ENCODE measurements at regions of chr6 and their contacts with region 1.

Region 1: GRCh38 chr6:125314019-125314581 is 12.3 kb upstream of the HDDC2 start:
- DNase-seq: peak in 4 of 5 donors; percentile 58 to 86 (median 74)
- H3K4me3 ChIP-seq: no peak overlapping the region
- H3K27ac ChIP-seq: no peak overlapping the region
- H3K4me1 ChIP-seq: peaks cover 0 to 2% (median 0%) of the 10 kb centered on the region in 3 donors
- H3K27me3 ChIP-seq: no peaks in the 10 kb centered on the region
- CTCF ChIP-seq: peak; percentile 89

Region 2: DNA sequence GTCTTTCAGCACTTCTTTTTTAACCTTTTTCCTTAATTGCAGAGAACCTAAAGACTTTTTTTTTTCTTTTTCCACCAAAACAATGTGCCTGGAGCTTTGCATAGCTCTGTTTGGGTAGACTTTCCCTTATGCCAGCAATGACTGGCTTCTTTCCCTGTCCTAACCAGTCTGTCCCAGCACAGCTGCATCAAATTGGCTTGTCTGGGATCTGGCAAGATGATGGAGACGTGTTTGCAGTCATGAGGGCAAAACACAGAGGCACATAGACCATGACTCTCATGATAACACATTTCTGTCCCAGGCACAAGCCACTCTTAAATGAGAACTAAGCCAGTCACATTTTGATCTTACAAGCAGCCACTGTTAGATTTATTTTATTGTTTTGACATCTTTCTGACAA is 451.8 kb after region 1 on chr6:
- intact Hi-C with region 1: loop called (anchors 5 kb)
- DNase-seq: no peak
- H3K4me3 ChIP-seq: no peak overlapping the region
- H3K27ac ChIP-seq: no peak overlapping the region
- H3K4me1 ChIP-seq: no peaks in the 10 kb centered on the region
- H3K27me3 ChIP-seq: no peaks in the 10 kb centered on the region
- CTCF ChIP-seq: no peak

Measured in kidney (tissue), 22 donors.